Mammary epithelial cell (primary cell): ENCODE measurements at regions of chr15 and their contacts with region 1.

Region 1: GRCh38 chr15:55434989-55435825 is 26.9 kb downstream of the PIERCE2 start:
- DNase-seq: peak; percentile 40
- H3K4me3 ChIP-seq: no peak overlapping the region
- H3K27ac ChIP-seq: no peak overlapping the region
- H3K4me1 ChIP-seq: no peaks in the 10 kb centered on the region
- H3K27me3 ChIP-seq: no peaks in the 10 kb centered on the region
- CTCF ChIP-seq: peak; percentile 45 to 64

Region 2: DNA sequence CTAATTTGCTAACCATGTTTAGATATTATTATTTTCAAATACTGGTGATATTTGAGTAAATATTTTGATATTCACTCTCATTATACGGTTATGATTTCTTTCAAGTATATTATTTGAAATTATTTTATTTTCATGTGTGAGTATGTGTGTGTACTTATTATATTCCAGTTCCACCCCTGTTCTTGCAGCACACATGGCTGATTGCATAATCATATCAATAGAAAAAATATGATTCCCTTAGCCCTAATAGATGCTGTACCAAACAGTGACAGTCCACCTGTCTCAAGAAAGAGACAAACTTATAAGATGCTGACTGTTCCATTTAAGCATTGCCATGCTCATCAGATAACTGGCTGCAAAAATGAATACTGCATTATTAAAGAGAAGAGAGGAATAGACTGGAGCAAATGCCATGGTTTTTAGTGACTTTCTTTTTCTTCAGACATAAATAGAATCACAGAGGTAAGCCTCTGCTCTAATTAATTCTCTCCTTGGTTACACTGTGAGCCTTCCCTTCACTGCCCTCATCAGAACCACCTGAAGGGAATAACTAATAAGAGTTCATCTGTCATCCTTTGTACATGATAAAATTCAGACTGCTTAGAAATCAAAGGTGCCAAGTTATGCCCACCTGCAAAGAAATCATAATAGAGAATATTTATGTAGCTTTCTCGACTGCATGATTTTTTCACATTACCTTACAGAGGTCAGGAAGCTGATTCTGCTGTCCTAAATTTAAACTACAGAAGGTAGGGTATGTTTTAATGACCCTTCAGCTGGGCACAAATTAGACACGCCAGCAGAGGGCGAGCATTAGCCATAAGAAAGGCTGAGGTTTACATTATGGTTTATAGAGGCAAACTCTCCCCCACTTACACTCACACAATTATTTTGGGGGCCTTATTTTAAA is 1472.6 kb before region 1 on chr15:
- CTCF ChIA-PET with region 1: no interaction called
- dilution Hi-C with region 1: no loop called
- in situ Hi-C with region 1: no loop called
- intact Hi-C with region 1: loop called (anchors 10 kb)
- DNase-seq: no peak
- H3K4me3 ChIP-seq: no peak overlapping the region
- H3K27ac ChIP-seq: no peak overlapping the region
- H3K4me1 ChIP-seq: no peaks in the 10 kb centered on the region
- H3K27me3 ChIP-seq: peaks cover 4% of the 10 kb centered on the region
- CTCF ChIP-seq: peak; percentile 74

Region 3: GRCh38 chr15:55196458-55197361 is 238.5 kb before region 1 on chr15 and contains the start of gene RSL24D1:
- CTCF ChIA-PET with region 1: no interaction called
- dilution Hi-C with region 1: no loop called
- in situ Hi-C with region 1: no loop called
- intact Hi-C with region 1: loop called (anchors 5 kb)
- DNase-seq: peak; percentile 99
- H3K4me3 ChIP-seq: peak within 1 kb of the TSS; percentile 65 to 97 (median 89)
- H3K27ac ChIP-seq: peak within 1 kb of the TSS; percentile 91
- H3K4me1 ChIP-seq: peaks cover 13% of the 10 kb centered on the region
- H3K27me3 ChIP-seq: no peaks in the 10 kb centered on the region
- CTCF ChIP-seq: peak; percentile 25 to 49
- total RNA-seq, gene RSL24D1: 94.7 to 114 TPM

Region 4: GRCh38 chr15:55221090-55222011 is 213.9 kb before region 1 on chr15:
- CTCF ChIA-PET with region 1: interaction called, 5 read pairs
- dilution Hi-C with region 1: no loop called
- in situ Hi-C with region 1: loop called (anchors 10 kb)
- intact Hi-C with region 1: loop called (anchors 1 kb)
- DNase-seq: peak; percentile 84
- H3K4me3 ChIP-seq: no peak overlapping the region
- H3K27ac ChIP-seq: peak overlapping the region; percentile 54
- H3K4me1 ChIP-seq: peaks cover 16% of the 10 kb centered on the region
- H3K27me3 ChIP-seq: no peaks in the 10 kb centered on the region
- CTCF ChIP-seq: no peak

Region 5: GRCh38 chr15:55318588-55319494 is 116.4 kb before region 1 on chr15 and contains the starts of genes PIGB and PIGBOS1:
- CTCF ChIA-PET with region 1: interaction called, 14 read pairs
- dilution Hi-C with region 1: no loop called
- in situ Hi-C with region 1: no loop called
- intact Hi-C with region 1: loop called (anchors 2 kb)
- DNase-seq: peak; percentile 85
- H3K4me3 ChIP-seq: peak within 1 kb of the TSS; percentile 63 to 88 (median 67)
- H3K27ac ChIP-seq: peak within 1 kb of the TSS; percentile 89
- H3K4me1 ChIP-seq: peaks cover 4% of the 10 kb centered on the region
- H3K27me3 ChIP-seq: no peaks in the 10 kb centered on the region
- CTCF ChIP-seq: no peak
- total RNA-seq, gene PIGB: 23.8 to 24.4 TPM
- total RNA-seq, gene PIGBOS1: 3.8 to 10.9 TPM

Region 6: GRCh38 chr15:55344206-55344605 is 91.0 kb before region 1 on chr15:
- CTCF ChIA-PET with region 1: no interaction called
- dilution Hi-C with region 1: no loop called
- in situ Hi-C with region 1: no loop called
- intact Hi-C with region 1: loop called (anchors 5 kb)
- DNase-seq: peak; percentile 43
- H3K4me3 ChIP-seq: no peak overlapping the region
- H3K27ac ChIP-seq: no peak overlapping the region
- H3K4me1 ChIP-seq: peaks cover 8% of the 10 kb centered on the region
- H3K27me3 ChIP-seq: no peaks in the 10 kb centered on the region
- CTCF ChIP-seq: no peak